ENCODE measurements at regions of chr7 and their contacts with region 1.

Region 1: DNA sequence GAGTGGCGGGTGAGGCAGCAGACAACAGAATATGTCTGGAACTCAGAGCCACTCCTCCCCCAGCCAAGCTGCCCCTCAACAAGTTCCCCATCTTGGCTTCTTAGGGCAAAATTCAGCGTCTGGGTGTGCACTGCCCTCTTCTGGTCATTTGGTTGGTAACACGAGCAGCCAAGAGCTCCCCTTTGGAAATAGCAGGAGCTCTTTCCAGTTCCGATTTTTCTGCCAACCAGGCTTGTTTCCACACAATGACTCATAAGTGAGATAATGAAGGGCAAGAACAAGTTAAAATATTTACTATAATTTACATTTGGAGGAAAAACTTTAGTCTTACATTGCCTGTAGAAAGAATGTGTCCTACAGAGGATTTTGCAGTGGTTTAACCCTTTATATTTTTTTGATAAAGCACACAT is 70.5 kb downstream of the ADCYAP1R1 start:
- DNase-seq: peak; percentile 54
- CTCF ChIP-seq: peak; percentile 78

Region 2: DNA sequence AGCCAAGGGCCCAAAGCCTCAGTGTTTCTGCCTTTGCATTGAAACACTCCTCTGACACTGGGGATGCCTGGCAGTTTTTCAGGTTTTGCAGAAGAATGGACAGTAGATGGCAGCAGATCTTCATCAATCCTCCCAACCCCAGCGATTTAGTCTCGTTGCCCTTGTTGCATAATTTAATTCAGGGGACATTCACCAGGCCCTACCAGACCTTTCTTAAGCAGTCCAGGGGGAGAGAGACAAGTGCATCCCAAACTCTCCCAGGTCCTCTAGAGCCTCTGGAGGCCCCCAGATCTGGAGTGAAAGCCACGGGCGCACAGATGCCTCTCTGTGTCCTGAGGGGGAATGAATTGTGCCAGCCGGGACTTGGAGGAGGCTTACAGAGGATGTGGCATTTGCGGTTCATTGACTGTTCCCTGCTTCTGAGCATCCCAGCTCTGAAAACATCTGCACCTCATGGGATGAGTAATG is 321.8 kb before region 1 on chr7:
- CTCF ChIA-PET with region 1: interaction called, 31 read pairs
- POLR2A ChIA-PET with region 1: no interaction called
- DNase-seq: peak; percentile 76
- CTCF ChIP-seq: peak; percentile 69

Region 3: DNA sequence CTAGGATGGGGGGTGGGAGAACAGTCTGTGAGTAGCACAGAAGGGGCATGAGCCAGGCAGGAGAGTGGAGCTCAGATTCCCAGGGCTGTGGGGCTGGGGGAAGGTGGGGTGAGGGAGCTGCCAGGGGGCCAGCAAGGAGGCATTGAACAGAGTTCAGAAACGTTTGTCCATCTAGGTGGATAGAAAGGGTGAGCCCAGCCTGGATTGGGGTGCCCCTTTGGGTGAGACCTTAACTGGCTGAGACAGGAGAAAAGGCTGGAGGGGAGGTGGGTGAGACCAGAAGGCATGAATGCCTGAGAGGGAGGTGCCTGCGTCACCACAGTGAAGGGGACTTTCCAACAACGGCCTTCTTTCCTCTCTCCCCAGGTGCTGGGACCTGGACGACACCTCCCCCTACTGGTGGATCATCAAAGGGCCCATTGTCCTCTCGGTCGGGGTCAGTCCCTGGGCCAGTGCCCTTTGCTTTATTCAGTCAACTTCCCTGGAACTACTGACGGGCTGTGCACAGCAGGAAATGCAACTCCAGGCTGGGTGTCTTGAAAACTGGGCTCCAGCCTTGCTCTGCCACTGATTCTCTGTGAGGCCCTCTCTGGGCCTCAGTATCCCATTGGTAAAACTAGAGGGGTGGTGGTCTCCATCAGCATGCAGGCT is 147.9 kb before region 1 on chr7:
- CTCF ChIA-PET with region 1: interaction called, 219 read pairs
- POLR2A ChIA-PET with region 1: no interaction called
- DNase-seq: peak; percentile 91
- CTCF ChIP-seq: peak; percentile 76

Region 4: DNA sequence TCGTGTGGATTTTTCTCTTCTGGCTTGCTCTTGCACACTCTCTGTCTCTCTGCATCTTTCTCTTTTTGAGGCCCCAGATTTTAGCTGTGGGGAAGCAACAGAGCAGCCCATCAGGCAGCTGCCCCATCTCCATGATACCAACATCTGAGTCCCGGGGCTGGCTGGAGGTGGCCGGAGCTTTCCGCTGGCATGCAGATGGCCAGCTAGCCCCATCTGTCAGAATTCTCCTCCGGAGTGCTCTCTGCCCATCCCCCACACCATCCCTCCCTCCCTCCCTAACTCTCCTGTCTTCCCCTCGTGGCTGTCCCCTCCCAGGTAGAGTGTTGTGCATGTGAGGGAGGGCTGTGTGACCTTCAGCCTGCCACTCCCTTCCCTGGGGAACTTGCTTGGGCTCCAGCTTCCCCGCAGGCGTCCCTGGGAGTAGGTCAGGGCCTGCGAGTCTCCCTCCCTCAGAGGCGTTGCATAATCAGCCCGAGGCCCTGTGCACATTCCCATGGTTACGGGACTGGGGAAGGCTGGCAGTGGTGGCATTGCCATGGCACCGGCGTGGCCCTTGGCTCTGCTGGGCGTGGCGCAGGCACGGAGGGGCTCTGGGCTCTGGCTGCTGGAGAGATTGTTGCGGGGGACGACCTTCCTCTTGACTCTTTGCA is 134.2 kb before region 1 on chr7:
- CTCF ChIA-PET with region 1: interaction called, 219 read pairs
- POLR2A ChIA-PET with region 1: no interaction called
- DNase-seq: no peak
- CTCF ChIP-seq: no peak

Region 5: DNA sequence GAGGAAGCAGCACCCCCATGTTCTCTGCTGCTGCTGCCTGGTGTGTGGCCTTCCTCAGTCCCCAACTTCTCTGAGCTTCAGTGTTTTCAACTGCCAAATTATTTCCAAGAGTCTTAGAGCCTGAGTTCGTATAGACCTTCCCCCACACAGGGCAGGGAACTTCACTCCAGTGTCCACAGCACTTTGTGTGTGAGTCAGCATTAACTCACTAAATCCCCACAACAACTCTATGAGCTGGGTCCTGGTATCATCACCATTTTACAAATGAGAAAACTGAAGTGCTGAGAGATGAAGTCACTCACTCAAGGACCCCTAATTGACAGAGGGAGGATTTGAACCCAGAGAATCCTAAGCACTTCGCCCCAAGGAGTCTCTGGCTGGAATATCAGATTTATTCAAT is 22.2 kb before region 1 on chr7:
- CTCF ChIA-PET with region 1: interaction called, 27 read pairs
- POLR2A ChIA-PET with region 1: no interaction called
- DNase-seq: no peak
- CTCF ChIP-seq: no peak

Measured in GM10248 (cell line).